Activated B cell treated with CpG ODN at 0.5 μM for 24 hours (primary cell): ENCODE measurements at regions of chr9 and their contacts with region 1.

Region 1: GRCh38 chr9:110183208-110184145 is 24.5 kb downstream of the C9orf152 start:
- DNase-seq: no peak
- ATAC-seq: peak; percentile 62
- H3K4me3 Mint-ChIP-seq: no peak overlapping the region
- H3K27ac Mint-ChIP-seq: no peak overlapping the region
- H3K4me1 Mint-ChIP-seq: no peaks in the 10 kb centered on the region
- H3K27me3 Mint-ChIP-seq: no peaks in the 10 kb centered on the region
- CTCF ChIP-seq: no peak

Region 2: DNA sequence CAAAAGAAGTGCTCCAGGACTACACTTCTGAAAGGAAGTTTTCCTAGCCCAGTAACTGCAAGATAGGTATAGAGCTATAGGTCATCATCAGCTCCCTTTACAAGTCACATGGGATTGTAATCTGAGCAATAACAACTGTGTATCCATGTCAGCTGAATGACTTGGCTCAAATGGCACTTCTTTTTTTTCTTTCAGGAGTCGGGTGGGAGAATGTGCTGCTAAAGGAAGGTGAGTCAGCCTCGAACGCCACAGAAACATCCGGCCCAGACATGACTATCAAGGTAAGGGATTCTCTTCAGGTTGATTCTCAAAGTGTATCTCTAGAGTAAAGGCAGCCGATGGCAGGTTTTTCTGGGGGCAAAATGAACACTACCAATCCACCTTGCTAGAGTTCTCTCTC is 167.7 kb before region 1 on chr9:
- CTCF ChIA-PET with region 1: no interaction called
- POLR2A ChIA-PET with region 1: no interaction called
- intact Hi-C with region 1: no loop called
- DNase-seq: no peak
- ATAC-seq: no peak
- H3K4me3 Mint-ChIP-seq: no peak overlapping the region
- H3K27ac Mint-ChIP-seq: no peak overlapping the region
- H3K4me1 Mint-ChIP-seq: peaks cover 5% of the 10 kb centered on the region
- H3K27me3 Mint-ChIP-seq: no peaks in the 10 kb centered on the region
- CTCF ChIP-seq: no peak

Region 3: GRCh38 chr9:110217656-110218099 is 34.2 kb after region 1 on chr9:
- CTCF ChIA-PET with region 1: interaction called, 7 read pairs
- POLR2A ChIA-PET with region 1: no interaction called
- intact Hi-C with region 1: loop called (anchors 1 kb)
- DNase-seq: no peak
- ATAC-seq: no peak
- H3K4me3 Mint-ChIP-seq: no peak overlapping the region
- H3K27ac Mint-ChIP-seq: no peak overlapping the region
- H3K4me1 Mint-ChIP-seq: peaks cover 4% of the 10 kb centered on the region
- H3K27me3 Mint-ChIP-seq: peaks cover 2% of the 10 kb centered on the region
- CTCF ChIP-seq: no peak

Region 4: GRCh38 chr9:110427497-110428104 is 244.1 kb after region 1 on chr9:
- CTCF ChIA-PET with region 1: no interaction called
- POLR2A ChIA-PET with region 1: no interaction called
- intact Hi-C with region 1: loop called (anchors 2 kb)
- DNase-seq: no peak
- ATAC-seq: no peak
- H3K4me3 Mint-ChIP-seq: no peak overlapping the region
- H3K27ac Mint-ChIP-seq: no peak overlapping the region
- H3K4me1 Mint-ChIP-seq: no peaks in the 10 kb centered on the region
- H3K27me3 Mint-ChIP-seq: peaks cover 2% of the 10 kb centered on the region
- CTCF ChIP-seq: no peak

Region 5: DNA sequence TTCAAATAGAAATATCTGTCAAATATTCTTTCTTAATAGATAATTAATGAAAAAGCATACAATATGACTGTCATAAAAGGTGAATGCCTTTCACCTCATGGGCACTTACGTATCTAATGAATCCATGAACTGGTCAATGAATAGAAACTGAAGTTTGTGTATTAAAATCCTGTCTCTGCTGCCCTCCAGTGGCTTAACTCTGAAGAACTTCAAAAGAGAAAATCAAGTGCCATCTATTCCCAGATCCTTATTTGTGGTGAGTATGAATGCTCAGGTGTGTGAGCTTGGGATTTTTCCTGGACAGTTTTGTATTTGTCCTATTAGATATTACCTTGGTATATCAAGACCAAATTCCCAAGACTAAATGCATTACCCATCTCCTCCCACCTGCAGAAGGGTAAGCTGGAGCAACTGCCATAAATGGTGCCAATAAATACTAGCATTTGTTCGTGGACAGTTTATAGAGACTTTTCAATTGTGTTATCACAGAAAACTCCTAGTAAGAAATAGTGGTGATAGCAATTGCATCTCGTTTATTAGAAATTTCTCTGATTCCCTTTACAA is 440.1 kb after region 1 on chr9:
- CTCF ChIA-PET with region 1: interaction called, 35 read pairs
- POLR2A ChIA-PET with region 1: no interaction called
- intact Hi-C with region 1: loop called (anchors 1 kb)
- DNase-seq: no peak
- ATAC-seq: no peak
- H3K4me3 Mint-ChIP-seq: no peak overlapping the region
- H3K27ac Mint-ChIP-seq: no peak overlapping the region
- H3K4me1 Mint-ChIP-seq: no peaks in the 10 kb centered on the region
- H3K27me3 Mint-ChIP-seq: no peaks in the 10 kb centered on the region
- CTCF ChIP-seq: no peak

Region 6: DNA sequence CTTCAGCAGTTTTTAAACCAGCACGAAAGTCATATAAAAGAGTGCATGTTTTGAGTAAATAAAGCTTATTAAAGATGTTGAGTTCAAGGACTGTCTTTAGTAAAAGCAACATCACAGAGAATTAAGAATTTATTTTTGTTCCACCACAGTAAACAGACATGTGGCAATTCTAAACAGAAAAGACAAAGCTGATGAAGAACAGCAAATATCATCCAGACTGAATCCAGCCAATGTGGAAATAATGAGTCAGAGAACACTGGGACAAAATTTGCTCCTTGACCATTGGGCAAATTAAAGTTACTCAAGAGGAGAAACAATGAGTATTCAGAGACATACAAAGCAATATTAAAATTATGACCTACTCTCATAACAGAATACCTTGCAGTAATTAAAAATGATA is 1117.7 kb after region 1 on chr9:
- CTCF ChIA-PET with region 1: no interaction called
- POLR2A ChIA-PET with region 1: no interaction called
- intact Hi-C with region 1: loop called (anchors 5 kb)
- DNase-seq: no peak
- ATAC-seq: no peak
- H3K4me3 Mint-ChIP-seq: no peak overlapping the region
- H3K27ac Mint-ChIP-seq: no peak overlapping the region
- H3K4me1 Mint-ChIP-seq: no peaks in the 10 kb centered on the region
- H3K27me3 Mint-ChIP-seq: no peaks in the 10 kb centered on the region
- CTCF ChIP-seq: no peak